ENCODE measurements at regions of chr19 and their contacts with region 1.

Region 1: DNA sequence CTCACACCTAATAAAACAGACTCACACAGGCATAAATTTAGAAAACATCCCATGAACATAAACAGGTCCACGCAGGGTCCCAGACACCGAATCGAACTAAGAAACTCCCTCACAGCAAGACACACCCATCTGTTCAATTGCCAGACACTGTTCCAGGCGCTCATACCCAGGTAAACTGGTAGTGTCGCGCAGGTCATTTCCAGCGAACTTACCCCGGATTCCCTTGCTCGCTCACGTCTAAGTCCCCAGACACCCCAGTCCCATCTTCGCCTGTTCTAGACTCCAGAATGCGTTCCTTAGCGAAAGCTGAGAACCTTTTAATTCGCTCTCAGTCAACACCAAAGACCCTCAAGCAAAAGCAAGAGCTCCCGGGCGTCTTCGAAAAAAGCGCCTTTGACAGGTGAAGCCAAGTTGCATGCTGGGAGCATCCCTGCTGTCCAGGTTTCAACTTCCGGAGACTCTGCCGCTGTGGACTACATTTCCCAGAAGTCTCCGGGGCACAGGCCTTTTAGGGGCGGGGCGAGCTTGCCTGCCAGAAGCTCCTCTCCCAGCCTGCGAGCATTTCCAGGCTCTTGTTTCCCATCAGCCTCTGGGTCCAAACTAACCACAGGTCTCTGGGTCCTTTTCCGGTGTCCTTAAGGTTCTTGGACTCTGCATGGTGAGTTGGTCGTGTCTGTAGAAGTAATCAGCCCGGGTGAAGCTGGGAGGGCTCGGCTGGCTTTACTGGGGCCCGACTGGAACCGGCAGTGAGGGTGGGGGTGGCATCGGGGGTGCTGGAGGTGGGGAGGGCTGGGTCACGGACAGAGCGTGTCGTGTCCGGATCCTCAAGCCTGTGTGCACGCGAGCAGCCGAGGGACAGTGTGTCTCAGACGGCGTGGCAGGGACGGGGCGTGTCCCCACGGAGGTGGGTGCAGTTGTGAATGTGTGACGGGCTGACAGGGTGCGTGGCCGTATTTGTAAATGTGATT is at the start of gene ZNF283:
- DNase-seq: peak; percentile 86
- ATAC-seq: peak; percentile 99
- H3K4me3 ChIP-seq: peak within 1 kb of the TSS; percentile 56 to 88 (median 69)
- H3K4me3 Mint-ChIP-seq: peak within 1 kb of the TSS; percentile 92
- H3K27ac ChIP-seq: peak within 1 kb of the TSS in 1 of 2 donors; percentile 23
- H3K27ac Mint-ChIP-seq: peak within 1 kb of the TSS; percentile 50
- H3K4me1 ChIP-seq: peaks cover 9 to 12% of the 10 kb centered on the region in 2 donors
- H3K4me1 Mint-ChIP-seq: peaks cover 17% of the 10 kb centered on the region
- H3K27me3 ChIP-seq: peaks cover 0 to under 1% (median 0%) of the 10 kb centered on the region in 4 experiments
- H3K27me3 Mint-ChIP-seq: peaks cover 11% of the 10 kb centered on the region
- CTCF ChIP-seq: no peak
- total RNA-seq, gene ZNF283: 20.8 and 23.3 TPM in 2 replicates

Region 2: GRCh38 chr19:44025217-44025936 is 198.3 kb after region 1 on chr19 and contains the start of gene ZNF222:
- CTCF ChIA-PET with region 1: no interaction called
- POLR2A ChIA-PET with region 1: no interaction called
- intact Hi-C with region 1: loop called (anchors 1 kb)
- DNase-seq: peak; percentile 83
- ATAC-seq: peak; percentile 97
- H3K4me3 ChIP-seq: peak within 1 kb of the TSS; percentile 72 to 98 (median 84)
- H3K4me3 Mint-ChIP-seq: peak within 1 kb of the TSS; percentile 96
- H3K27ac ChIP-seq: peak within 1 kb of the TSS; percentile 38 to 66
- H3K27ac Mint-ChIP-seq: peak within 1 kb of the TSS; percentile 88
- H3K4me1 ChIP-seq: peaks cover 11 to 13% of the 10 kb centered on the region in 2 donors
- H3K4me1 Mint-ChIP-seq: peaks cover 19% of the 10 kb centered on the region
- H3K27me3 ChIP-seq: no peaks in the 10 kb centered on the region
- H3K27me3 Mint-ChIP-seq: peaks cover 8% of the 10 kb centered on the region
- CTCF ChIP-seq: no peak
- total RNA-seq, gene ZNF222: 7.5 and 9.1 TPM in 2 replicates

Measured in B cell (primary cell).